Activated CD4-positive, alpha-beta T cell treated with anti-CD3 and anti-CD28 coated beads, Interleukin-2, amount 10 ng/mL, durations not matched to agents 24 days and 14 days (primary cell): ENCODE measurements at regions of chr9 and their contacts with region 1.

Region 1: DNA sequence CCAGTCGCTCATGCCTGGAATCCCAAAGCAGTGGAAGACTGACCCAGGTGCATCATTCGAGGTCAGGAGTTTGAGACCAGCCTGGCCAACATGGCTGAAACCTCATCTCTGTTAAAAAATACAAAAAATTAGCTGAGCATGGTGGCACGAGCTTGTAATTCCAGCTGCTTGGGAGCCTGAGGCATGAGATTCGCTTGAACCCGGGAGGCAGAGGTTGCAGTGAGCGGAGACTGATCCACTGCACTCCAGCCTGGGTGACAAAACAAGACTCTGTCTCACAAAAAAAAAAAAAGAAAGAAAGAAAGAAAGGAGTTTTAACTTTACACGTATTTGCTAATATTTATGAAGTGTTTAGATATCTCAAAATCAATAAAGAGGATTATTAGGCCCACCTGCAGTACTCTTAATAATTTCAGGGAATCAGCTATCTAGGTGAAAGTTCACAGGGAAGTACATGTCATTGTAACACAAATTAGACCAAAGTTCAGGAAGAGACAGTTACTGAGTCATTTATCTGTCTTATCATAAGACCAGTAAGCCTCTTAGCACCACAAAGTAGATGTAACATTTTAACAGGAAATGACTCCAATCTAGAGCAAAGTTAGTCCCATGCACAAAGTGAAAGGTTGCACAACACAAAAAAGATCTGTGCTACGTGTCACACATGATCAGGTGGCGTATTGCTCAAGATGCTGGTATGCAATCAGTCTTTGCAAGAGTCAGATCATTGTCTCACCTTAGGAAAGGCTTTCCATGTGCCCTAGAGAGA is 34.1 kb upstream of the PLIN2 start:
- DNase-seq: peak; percentile 86
- H3K4me3 Mint-ChIP-seq: peak overlapping the region; percentile 67
- H3K27ac Mint-ChIP-seq: peak overlapping the region; percentile 89
- H3K4me1 Mint-ChIP-seq: peaks cover 24% of the 10 kb centered on the region
- H3K27me3 Mint-ChIP-seq: no peaks in the 10 kb centered on the region

Region 2: DNA sequence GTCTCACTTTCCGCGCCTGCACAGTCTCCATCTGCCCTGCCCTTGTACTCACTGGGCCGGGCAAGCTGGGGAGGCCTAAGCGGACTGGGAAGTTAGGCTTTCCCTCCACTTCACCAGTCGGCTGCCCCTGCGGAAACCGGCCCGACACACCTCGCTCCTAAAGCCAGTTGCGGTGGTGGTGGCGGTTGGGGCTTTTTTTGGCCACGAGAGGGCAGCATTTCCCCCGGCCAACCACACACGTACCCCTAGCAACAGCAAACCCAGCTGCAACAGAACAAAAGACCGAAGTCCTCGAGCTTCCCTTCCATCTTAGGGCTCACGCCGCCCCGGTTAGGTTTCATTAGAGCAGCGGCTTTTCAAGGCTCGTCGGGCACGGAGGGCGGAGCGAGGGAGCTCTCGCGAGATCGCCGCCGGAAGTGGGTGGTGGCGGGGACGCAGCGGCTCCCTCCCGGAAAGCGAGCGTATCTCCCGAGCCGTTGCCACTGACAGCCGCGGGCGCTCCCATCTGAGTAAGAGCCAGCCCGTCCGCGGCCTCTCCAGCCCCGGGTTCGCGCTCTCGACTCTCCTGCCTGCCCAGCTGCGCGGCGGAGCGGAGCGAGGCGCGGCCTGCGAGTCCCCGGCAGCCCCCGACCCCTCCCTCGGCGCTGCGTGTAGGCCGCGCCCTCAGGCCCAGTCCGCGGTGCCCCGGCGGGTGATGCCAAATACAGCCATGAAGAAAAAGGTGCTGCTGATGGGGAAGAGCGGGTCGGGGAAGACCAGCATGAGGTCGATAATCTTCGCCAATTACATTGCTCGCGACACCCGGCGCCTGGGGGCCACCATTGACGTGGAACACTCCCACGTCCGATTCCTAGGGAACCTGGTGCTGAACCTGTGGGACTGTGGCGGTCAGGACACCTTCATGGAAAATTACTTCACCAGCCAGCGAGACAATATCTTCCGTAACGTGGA is 112.2 kb before region 1 on chr9 and contains the start of gene RRAGA:
- intact Hi-C with region 1: loop called (anchors 1 kb)
- DNase-seq: peak; percentile 99
- H3K4me3 Mint-ChIP-seq: peak within 1 kb of the TSS; percentile 95
- H3K27ac Mint-ChIP-seq: peak within 1 kb of the TSS; percentile 99
- H3K4me1 Mint-ChIP-seq: peaks cover 32% of the 10 kb centered on the region
- H3K27me3 Mint-ChIP-seq: no peaks in the 10 kb centered on the region
- total RNA-seq, gene RRAGA: 54.1 and 54.3 TPM in 2 replicates

Region 3: GRCh38 chr9:19133549-19134345 is 27.7 kb before region 1 on chr9:
- intact Hi-C with region 1: loop called (anchors 1 kb)
- DNase-seq: no peak
- H3K4me3 Mint-ChIP-seq: no peak overlapping the region
- H3K27ac Mint-ChIP-seq: peak overlapping the region; percentile 31
- H3K4me1 Mint-ChIP-seq: peaks cover 22% of the 10 kb centered on the region
- H3K27me3 Mint-ChIP-seq: no peaks in the 10 kb centered on the region

Region 4: DNA sequence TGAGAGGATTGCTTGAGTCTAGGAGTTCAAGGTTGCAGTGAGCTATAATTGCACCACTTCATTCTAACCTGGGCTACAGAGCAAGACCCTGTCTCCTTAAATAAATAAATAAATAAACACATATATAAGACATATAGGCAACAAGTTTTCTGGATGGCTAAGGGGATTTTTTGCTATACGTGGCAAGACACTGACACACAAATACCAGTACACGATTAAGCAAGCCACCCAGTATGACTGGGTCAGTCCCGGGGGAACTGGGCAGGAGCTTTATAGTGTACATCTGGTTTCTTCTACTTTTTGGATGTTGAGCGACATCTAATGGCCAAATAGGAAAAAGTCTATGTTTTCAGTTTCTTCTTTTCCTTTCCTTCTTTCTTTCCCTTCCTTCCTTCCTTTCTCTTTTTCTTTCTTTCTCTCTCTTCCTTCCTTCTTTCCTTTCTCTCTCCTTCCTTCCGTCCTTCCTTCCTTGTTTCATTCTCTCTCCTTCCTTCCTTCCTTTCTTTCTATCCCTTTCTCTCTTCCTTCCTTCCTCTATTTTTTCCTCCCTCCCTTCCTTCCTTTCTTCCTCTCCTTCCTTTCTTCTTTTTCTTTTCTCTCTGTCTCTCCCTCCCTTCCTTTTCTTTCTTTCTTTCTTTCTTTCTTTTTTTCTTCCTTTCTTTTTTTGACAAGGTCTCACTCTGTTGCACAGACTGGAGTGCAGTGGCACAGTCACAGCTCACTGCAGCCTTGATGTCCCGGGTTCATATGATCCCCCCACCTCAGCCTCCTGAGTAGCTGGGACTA is 12.9 kb after region 1 on chr9:
- intact Hi-C with region 1: loop called (anchors 1 kb)
- DNase-seq: peak; percentile 80
- H3K4me3 Mint-ChIP-seq: peak overlapping the region; percentile 22
- H3K27ac Mint-ChIP-seq: peak overlapping the region; percentile 34
- H3K4me1 Mint-ChIP-seq: peaks cover 21% of the 10 kb centered on the region
- H3K27me3 Mint-ChIP-seq: no peaks in the 10 kb centered on the region

Region 5: DNA sequence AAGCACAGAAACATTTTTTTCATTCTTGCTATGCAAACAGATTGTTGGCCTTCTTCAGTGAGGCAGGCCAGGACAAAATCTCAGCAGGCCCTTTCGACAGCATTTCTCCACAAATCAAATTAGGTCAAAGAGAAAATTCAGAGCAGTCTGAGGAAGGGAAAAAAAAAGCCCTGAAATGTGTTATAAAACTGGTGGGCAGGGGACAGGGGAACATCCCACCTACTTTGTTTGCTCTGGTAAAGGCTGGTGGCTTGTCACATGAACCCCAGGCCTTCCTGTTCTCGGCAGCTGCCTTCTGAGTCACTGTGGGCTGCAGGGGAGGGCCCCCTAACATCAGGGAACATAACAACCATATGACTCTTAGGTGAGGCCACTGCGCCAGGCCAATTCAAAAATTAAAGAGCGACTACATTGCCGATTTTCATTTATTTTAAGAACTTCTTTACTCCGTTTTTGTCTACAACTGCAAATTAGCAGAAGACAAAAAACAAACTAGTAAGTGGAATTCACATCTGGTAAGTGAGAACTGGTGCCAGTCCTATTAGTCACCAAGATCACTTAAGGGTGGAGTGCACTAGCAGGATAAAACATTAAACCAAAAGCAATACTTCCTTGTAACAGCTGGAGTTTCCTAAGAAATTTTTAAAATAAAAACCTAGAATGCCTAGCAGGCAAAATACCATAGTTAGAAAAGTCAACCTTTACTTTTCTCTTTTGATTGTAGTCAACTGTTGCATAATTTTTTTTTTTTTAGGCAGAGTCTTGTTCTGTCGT is 22.9 kb after region 1 on chr9:
- intact Hi-C with region 1: loop called (anchors 1 kb)
- DNase-seq: peak; percentile 91
- H3K4me3 Mint-ChIP-seq: peak overlapping the region; percentile 75
- H3K27ac Mint-ChIP-seq: peak overlapping the region; percentile 90
- H3K4me1 Mint-ChIP-seq: peaks cover 19% of the 10 kb centered on the region
- H3K27me3 Mint-ChIP-seq: no peaks in the 10 kb centered on the region